Ascending aorta (tissue), 2 donors: ENCODE measurements at regions of chr4 and their contacts with region 1.

Region 1: DNA sequence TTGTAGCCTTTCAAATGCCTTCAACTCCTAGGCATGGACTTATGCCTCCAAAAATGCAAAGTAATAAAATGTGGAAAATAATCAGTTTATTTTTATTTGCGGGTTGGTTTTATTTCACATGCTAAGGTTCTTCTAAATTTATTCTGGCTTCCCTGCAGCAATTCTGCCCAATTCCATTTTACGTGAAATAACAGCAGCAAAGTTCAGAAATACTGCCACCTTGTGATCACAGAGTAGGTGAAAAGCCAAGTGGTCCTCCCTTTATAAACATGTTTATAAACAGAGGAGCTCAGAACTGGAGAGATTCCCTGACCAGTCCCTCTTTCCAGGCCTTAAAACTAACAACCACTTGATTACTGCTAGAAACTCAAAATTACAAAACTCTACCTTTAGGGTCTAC is 14.7 kb upstream of the DCHS2 start:
- DNase-seq: no peak
- H3K4me3 ChIP-seq: no peak overlapping the region
- H3K27ac ChIP-seq: no peak overlapping the region
- H3K4me1 ChIP-seq: no peaks in the 10 kb centered on the region
- H3K27me3 ChIP-seq: no peaks in the 10 kb centered on the region
- CTCF ChIP-seq: peak in 2 of 3 experiments; percentile 16 to 45

Region 2: GRCh38 chr4:154329941-154330340 is 176.3 kb before region 1 on chr4:
- intact Hi-C with region 1: loop called (anchors 2 kb)
- DNase-seq: no peak
- H3K4me3 ChIP-seq: no peak overlapping the region
- H3K27ac ChIP-seq: no peak overlapping the region
- H3K4me1 ChIP-seq: no peaks in the 10 kb centered on the region
- H3K27me3 ChIP-seq: no peaks in the 10 kb centered on the region
- CTCF ChIP-seq: no peak

Region 3: DNA sequence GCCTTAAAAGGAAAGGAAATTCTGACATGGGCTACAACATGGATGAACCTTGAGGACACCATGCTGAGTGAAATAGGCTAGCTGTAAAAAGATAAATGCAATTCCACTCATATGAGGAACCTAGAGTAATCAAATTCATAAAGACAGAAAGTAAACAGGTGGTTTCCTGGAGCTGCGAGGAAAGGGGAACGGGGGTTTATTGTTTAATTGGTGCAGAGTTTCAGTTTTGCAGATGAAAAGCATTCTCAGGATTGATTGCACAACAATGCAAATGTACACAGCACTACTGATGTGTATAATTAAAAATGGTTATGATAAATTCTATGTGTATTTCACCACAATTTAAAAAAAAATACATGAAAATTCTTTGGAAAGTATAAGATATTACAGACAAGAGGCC is 19.9 kb after region 1 on chr4:
- intact Hi-C with region 1: no loop called
- DNase-seq: no peak
- H3K4me3 ChIP-seq: no peak overlapping the region
- H3K27ac ChIP-seq: no peak overlapping the region
- H3K4me1 ChIP-seq: no peaks in the 10 kb centered on the region
- H3K27me3 ChIP-seq: no peaks in the 10 kb centered on the region
- CTCF ChIP-seq: no peak